ENCODE measurements at regions of chr2 and their contacts with region 1.

Region 1: DNA sequence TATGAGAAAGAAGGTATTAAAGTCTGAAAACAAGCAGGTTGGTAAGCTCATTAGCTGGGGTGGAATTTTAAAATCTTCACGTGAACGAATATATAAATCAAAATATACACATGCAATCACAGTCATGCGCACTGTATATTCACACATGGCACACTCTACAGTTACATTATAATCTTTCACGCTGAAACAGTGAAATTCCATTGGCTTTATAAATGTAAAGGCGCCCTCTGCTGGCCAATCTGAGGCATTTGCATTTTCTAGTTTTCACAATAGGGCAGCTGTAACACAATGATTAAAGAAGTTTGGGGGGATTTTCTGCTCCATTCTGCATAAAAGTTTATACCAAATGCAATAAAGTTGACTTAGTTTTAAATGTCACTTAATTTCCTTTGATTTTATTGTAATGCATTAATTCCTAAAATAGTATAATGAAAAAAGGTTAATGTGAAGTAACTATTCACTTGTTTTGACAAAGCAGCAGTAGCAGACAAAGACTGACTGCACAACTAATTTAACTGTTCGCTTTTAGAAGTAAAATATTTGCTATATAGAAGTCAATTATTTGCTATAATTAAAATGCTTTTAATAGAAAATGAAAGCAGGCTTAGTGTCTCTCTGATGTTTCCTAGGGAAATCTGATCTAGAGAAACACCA is 17.2 kb downstream of the IFIH1 start:
- H3K4me3 ChIP-seq: no peak overlapping the region
- H3K27ac ChIP-seq: no peak overlapping the region
- H3K4me1 ChIP-seq: no peaks in the 10 kb centered on the region
- CTCF ChIP-seq: 0 out of 2 replicates have a peak, but pooled peaks have one; percentile 10

Region 2: GRCh38 chr2:162153608-162154224 is 147.6 kb before region 1 on chr2:
- CTCF ChIA-PET with region 1: interaction called, 112 read pairs
- POLR2A ChIA-PET with region 1: no interaction called
- H3K4me3 ChIP-seq: no peak overlapping the region
- H3K27ac ChIP-seq: no peak overlapping the region
- H3K4me1 ChIP-seq: no peaks in the 10 kb centered on the region
- CTCF ChIP-seq: peak; percentile 30; the same call in 1 of the 2 replicates

Region 3: DNA sequence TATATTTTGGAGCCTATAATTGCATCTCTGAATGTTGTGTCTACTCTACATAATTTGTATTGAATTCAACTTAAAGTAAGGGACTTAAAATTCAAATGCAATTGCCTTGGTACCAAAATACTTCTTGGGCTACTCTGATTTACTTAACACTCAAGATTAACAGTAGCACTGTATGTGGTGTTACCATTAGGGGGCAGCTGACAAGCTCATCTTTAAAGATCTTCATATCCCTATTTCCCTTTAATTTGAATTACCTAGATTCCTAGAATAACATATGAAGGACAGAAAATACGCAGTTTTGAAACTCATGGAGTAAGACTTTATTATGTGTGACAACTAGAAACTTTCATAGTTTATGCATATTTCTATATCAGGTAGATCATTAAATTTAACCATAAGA is 20.6 kb before region 1 on chr2:
- CTCF ChIA-PET with region 1: interaction called, 32 read pairs
- POLR2A ChIA-PET with region 1: no interaction called
- H3K4me3 ChIP-seq: no peak overlapping the region
- H3K27ac ChIP-seq: no peak overlapping the region
- H3K4me1 ChIP-seq: no peaks in the 10 kb centered on the region
- CTCF ChIP-seq: no peak

Region 4: GRCh38 chr2:162318328-162319180 is 17.3 kb after region 1 on chr2 and contains the start of gene IFIH1:
- CTCF ChIA-PET with region 1: interaction called, 16 read pairs
- POLR2A ChIA-PET with region 1: no interaction called
- H3K4me3 ChIP-seq: peak within 1 kb of the TSS; percentile 69
- H3K27ac ChIP-seq: peak within 1 kb of the TSS; percentile 69; the same call in 1 of the 2 replicates
- H3K4me1 ChIP-seq: peaks cover 3% of the 10 kb centered on the region; the same call in 1 of the 2 replicates
- CTCF ChIP-seq: no peak; the same call in 1 of the 2 replicates